Activated CD4-positive, alpha-beta memory T cell treated with anti-CD3 and anti-CD28 coated beads, Interleukin-2, amount 10 ng/mL, durations not matched to agents 7 days and 5 days (primary cell): ENCODE measurements at regions of chr3 and their contacts with region 1.

Region 1: DNA sequence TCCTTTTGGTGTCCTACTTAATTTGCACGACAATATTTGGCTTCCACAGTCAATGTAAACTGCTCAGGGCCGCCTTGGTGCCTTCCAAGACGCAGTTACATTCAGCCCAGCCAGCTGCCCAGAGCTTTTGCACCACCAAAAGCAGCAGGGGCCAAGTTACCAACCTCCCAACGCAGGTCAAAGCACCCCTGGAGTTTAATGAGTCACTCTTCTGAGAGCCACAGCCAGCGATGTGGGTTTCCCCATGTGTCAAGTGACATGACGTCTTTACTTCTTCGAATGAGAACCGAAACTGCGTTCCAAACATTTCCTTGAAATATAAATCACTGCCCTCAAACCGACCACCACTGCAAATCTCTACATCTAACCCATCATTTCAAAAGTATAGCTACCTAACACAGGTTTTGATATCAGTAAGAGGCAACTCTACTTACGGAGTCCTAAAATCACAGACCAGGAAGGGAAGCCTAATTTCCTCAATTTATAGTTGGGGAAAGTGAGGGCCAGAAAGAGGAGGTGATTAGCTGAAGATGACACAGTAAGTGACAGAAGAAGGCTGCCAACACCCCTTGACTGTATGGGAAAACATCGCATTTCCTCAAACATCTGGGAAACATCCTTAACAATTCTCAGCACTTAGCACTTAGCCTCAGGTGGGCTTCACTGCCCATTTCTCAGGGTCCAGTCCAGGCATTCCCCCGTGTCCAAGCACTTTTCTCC is 24.5 kb downstream of the MB21D2 start:
- DNase-seq: peak; percentile 86
- H3K4me3 Mint-ChIP-seq: peak overlapping the region; percentile 33
- H3K27ac Mint-ChIP-seq: peak overlapping the region; percentile 96
- H3K4me1 Mint-ChIP-seq: peaks cover 96% of the 10 kb centered on the region
- H3K27me3 Mint-ChIP-seq: peaks cover 2% of the 10 kb centered on the region

Region 2: DNA sequence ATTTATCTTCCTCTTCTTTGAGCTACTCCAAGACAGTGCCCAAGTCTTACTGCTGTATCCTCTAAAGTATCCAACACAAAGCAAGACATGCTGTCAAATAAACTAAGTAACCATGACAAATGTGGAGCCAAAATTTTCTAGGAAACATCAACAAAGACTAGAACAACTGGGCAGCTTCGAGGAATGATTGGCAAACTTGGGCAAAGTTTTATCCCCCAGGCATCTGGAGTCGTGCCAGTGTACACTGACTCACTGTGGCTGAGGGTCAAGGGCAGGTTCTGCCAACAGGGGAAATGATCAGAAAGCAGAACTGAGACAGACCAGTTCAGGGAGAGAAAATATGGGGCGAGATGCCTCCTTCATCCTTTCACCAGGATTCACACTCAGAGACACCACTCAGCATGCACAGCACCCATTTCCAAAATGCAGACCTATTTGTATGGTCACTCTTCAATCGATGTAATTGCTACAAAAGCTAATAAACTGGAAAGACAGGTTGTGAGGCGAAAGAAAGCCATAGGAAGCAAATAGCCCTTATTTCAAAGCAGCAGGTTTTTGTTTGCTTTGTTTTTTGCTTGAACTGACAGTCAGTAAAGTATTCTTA is 41.2 kb before region 1 on chr3:
- CTCF ChIA-PET with region 1: interaction called, 3 read pairs
- POLR2A ChIA-PET with region 1: interaction called, 16 read pairs
- DNase-seq: no peak
- H3K4me3 Mint-ChIP-seq: no peak overlapping the region
- H3K27ac Mint-ChIP-seq: no peak overlapping the region
- H3K4me1 Mint-ChIP-seq: peaks cover 57% of the 10 kb centered on the region
- H3K27me3 Mint-ChIP-seq: no peaks in the 10 kb centered on the region

Region 3: DNA sequence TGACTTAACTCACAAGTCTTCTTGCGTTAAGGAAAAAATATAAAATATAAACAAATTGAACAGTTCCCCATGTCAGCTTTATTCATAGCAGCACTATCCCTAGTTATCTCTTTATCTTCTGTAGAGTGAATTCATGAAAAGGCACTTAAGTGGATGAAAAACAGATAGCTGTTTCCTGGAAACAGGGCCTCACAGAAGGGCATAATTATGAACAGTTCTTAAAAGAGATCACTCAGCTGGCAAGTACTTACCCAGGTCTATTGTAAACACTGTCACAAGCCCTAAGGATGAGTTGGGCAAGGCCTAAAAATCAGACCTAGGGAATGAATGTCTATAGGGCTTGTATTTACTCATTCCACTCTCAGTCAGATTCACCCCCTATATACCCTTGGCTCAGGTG is 13.8 kb after region 1 on chr3:
- CTCF ChIA-PET with region 1: interaction called, 3 read pairs
- POLR2A ChIA-PET with region 1: interaction called, 93 read pairs
- DNase-seq: no peak
- H3K4me3 Mint-ChIP-seq: no peak overlapping the region
- H3K27ac Mint-ChIP-seq: peak overlapping the region; percentile 58
- H3K4me1 Mint-ChIP-seq: peaks cover 57% of the 10 kb centered on the region
- H3K27me3 Mint-ChIP-seq: no peaks in the 10 kb centered on the region